ENCODE measurements at regions of chr1 and their contacts with region 1.

Region 1: GRCh38 chr1:153532769-153533599 is 2.8 kb downstream of the S100A6 start:
- DNase-seq: peak; percentile 87
- H3K4me3 Mint-ChIP-seq: peak overlapping the region; percentile 82
- H3K27ac Mint-ChIP-seq: peak overlapping the region; percentile 91
- H3K4me1 Mint-ChIP-seq: peaks cover 62% of the 10 kb centered on the region
- H3K27me3 Mint-ChIP-seq: no peaks in the 10 kb centered on the region

Region 2: DNA sequence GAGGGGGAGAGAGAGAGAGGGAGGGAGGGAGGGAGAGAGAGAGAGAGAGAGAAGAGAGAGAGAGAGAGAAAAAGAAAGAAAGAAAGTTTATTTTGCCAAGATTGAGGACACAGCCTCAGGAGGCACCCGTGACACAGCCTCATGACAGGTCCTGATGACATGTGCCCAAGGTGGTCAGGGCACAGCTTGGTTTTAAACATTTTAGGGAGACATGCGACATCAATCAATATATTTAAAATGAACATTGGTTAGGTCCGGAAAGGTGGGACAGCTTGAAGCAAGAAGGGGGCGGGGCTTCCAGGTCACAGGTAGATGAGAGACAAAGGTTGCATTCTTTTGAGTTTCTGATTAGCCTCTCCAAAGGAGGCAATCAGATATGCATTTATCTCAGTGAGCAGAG is 12.8 kb before region 1 on chr1:
- CTCF ChIA-PET with region 1: interaction called, 19 read pairs
- DNase-seq: no peak
- H3K4me3 Mint-ChIP-seq: no peak overlapping the region
- H3K27ac Mint-ChIP-seq: no peak overlapping the region
- H3K4me1 Mint-ChIP-seq: peaks cover 19% of the 10 kb centered on the region
- H3K27me3 Mint-ChIP-seq: peaks cover 7% of the 10 kb centered on the region

Region 3: GRCh38 chr1:153545067-153546055 is 12.4 kb after region 1 on chr1 and contains the start of gene S100A4:
- CTCF ChIA-PET with region 1: interaction called, 74 read pairs
- DNase-seq: peak; percentile 96
- H3K4me3 Mint-ChIP-seq: peak within 1 kb of the TSS; percentile 93
- H3K27ac Mint-ChIP-seq: peak within 1 kb of the TSS; percentile 99
- H3K4me1 Mint-ChIP-seq: peaks cover 94% of the 10 kb centered on the region
- H3K27me3 Mint-ChIP-seq: peaks cover 18% of the 10 kb centered on the region

Region 4: DNA sequence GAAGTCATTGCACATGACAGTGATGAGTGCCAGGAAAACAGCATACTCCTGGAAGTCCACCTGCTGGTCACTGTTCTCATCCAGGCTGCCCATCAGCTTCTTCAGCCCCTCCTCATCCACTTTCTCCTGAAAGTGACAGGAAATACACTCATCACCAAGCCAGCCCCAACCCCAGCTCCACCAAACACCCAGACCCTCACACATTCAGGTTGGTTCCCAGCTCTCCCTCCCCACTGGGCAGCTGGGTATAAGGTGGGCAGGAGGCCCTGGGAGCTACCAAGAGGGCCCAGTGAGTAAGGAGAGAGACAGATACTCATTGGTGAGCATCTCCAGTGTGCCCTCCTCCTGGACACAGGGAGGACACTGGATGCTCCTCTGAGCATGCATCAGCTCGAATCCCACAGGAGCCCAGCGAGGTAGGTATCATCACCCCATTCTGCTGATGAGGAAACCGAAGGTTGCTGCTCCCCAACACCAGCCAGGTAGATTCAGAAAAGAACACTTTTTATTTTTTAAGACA is 28.5 kb after region 1 on chr1:
- CTCF ChIA-PET with region 1: interaction called, 47 read pairs
- DNase-seq: no peak
- H3K4me3 Mint-ChIP-seq: no peak overlapping the region
- H3K27ac Mint-ChIP-seq: no peak overlapping the region
- H3K4me1 Mint-ChIP-seq: peaks cover 16% of the 10 kb centered on the region
- H3K27me3 Mint-ChIP-seq: no peaks in the 10 kb centered on the region

Region 5: GRCh38 chr1:153566440-153567379 is 33.7 kb after region 1 on chr1:
- CTCF ChIA-PET with region 1: interaction called, 204 read pairs
- DNase-seq: peak; percentile 87
- H3K4me3 Mint-ChIP-seq: peak overlapping the region; percentile 42
- H3K27ac Mint-ChIP-seq: peak overlapping the region; percentile 96
- H3K4me1 Mint-ChIP-seq: peaks cover 41% of the 10 kb centered on the region
- H3K27me3 Mint-ChIP-seq: peaks cover 15% of the 10 kb centered on the region